ENCODE measurements at regions of chr13 and their contacts with region 1.

Region 1: GRCh38 chr13:99656092-99656745 is 154.9 kb downstream of the TM9SF2 start:
- DNase-seq: peak; percentile 91
- ATAC-seq: peak; percentile 73
- H3K4me3 Mint-ChIP-seq: peak overlapping the region; percentile 48
- H3K27ac Mint-ChIP-seq: peak overlapping the region; percentile 62
- H3K4me1 Mint-ChIP-seq: peaks cover 49% of the 10 kb centered on the region
- H3K27me3 Mint-ChIP-seq: no peaks in the 10 kb centered on the region

Region 2: GRCh38 chr13:99666146-99666805 is 10.1 kb after region 1 on chr13:
- CTCF ChIA-PET with region 1: interaction called, 13 read pairs
- POLR2A ChIA-PET with region 1: no interaction called
- intact Hi-C with region 1: no loop called
- DNase-seq: no peak
- ATAC-seq: no peak
- H3K4me3 Mint-ChIP-seq: no peak overlapping the region
- H3K27ac Mint-ChIP-seq: no peak overlapping the region
- H3K4me1 Mint-ChIP-seq: no peaks in the 10 kb centered on the region
- H3K27me3 Mint-ChIP-seq: no peaks in the 10 kb centered on the region

Region 3: GRCh38 chr13:99895223-99895994 is 239.2 kb after region 1 on chr13:
- CTCF ChIA-PET with region 1: interaction called, 8 read pairs
- POLR2A ChIA-PET with region 1: no interaction called
- intact Hi-C with region 1: loop called (anchors 1 to 5 kb)
- DNase-seq: peak; percentile 24
- ATAC-seq: no peak
- H3K4me3 Mint-ChIP-seq: peak overlapping the region; percentile 60
- H3K27ac Mint-ChIP-seq: no peak overlapping the region
- H3K4me1 Mint-ChIP-seq: peaks cover 9% of the 10 kb centered on the region
- H3K27me3 Mint-ChIP-seq: peaks cover 45% of the 10 kb centered on the region

Region 4: DNA sequence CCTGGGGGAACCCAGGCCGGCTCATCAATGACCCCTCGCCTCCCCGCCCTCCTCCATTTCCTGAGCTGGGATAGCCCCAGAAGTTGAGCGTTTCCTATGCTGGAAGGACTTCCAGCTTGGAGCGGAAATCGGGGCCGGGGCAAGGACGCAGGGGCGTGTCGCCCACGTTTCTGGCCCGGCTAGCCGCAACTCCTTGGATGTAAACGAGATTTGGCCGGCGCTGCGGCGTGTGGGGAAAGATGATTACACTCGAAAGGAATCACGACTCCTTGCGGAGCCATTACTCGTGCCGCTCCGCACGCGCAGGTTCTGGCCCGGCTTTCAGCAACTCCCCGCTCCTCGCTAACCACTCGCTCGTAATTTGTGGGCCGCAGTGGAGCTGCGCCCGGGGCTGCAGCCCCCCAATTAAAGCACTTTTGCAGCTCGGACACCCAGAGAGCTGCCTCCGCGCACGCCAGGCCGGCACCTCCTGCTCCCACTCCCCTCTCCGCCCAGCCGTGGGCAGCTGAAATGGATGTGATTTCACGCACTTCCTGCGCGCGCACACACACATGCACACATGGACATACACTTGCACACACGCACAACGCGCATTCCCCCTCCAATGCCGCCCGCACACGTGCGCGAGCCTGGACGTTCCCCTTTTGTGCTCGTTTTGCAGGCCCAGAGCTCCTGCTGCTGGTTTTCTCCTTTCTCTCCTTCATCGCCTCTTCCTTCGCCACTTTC is 299.7 kb after region 1 on chr13:
- CTCF ChIA-PET with region 1: interaction called, 6 read pairs
- POLR2A ChIA-PET with region 1: no interaction called
- intact Hi-C with region 1: loop called (anchors 5 kb)
- DNase-seq: peak; percentile 19
- ATAC-seq: no peak
- H3K4me3 Mint-ChIP-seq: no peak overlapping the region
- H3K27ac Mint-ChIP-seq: no peak overlapping the region
- H3K4me1 Mint-ChIP-seq: peaks cover 28% of the 10 kb centered on the region
- H3K27me3 Mint-ChIP-seq: peaks cover 74% of the 10 kb centered on the region

Region 5: GRCh38 chr13:100235311-100235901 is 579.2 kb after region 1 on chr13:
- CTCF ChIA-PET with region 1: interaction called, 15 read pairs
- POLR2A ChIA-PET with region 1: no interaction called
- intact Hi-C with region 1: loop called (anchors 1 kb)
- DNase-seq: no peak
- ATAC-seq: no peak
- H3K4me3 Mint-ChIP-seq: no peak overlapping the region
- H3K27ac Mint-ChIP-seq: no peak overlapping the region
- H3K4me1 Mint-ChIP-seq: peaks cover 3% of the 10 kb centered on the region
- H3K27me3 Mint-ChIP-seq: no peaks in the 10 kb centered on the region

Region 6: GRCh38 chr13:100542826-100543156 is 886.6 kb after region 1 on chr13:
- CTCF ChIA-PET with region 1: no interaction called
- POLR2A ChIA-PET with region 1: no interaction called
- intact Hi-C with region 1: loop called in 1 of 2 experiments (anchors 1 kb)
- DNase-seq: peak; percentile 14
- ATAC-seq: peak; percentile 64
- H3K4me3 Mint-ChIP-seq: no peak overlapping the region
- H3K27ac Mint-ChIP-seq: no peak overlapping the region
- H3K4me1 Mint-ChIP-seq: peaks cover 20% of the 10 kb centered on the region
- H3K27me3 Mint-ChIP-seq: no peaks in the 10 kb centered on the region